IMR-90 (cell line): ENCODE measurements at regions of chr3 and their contacts with region 1.

Region 1: DNA sequence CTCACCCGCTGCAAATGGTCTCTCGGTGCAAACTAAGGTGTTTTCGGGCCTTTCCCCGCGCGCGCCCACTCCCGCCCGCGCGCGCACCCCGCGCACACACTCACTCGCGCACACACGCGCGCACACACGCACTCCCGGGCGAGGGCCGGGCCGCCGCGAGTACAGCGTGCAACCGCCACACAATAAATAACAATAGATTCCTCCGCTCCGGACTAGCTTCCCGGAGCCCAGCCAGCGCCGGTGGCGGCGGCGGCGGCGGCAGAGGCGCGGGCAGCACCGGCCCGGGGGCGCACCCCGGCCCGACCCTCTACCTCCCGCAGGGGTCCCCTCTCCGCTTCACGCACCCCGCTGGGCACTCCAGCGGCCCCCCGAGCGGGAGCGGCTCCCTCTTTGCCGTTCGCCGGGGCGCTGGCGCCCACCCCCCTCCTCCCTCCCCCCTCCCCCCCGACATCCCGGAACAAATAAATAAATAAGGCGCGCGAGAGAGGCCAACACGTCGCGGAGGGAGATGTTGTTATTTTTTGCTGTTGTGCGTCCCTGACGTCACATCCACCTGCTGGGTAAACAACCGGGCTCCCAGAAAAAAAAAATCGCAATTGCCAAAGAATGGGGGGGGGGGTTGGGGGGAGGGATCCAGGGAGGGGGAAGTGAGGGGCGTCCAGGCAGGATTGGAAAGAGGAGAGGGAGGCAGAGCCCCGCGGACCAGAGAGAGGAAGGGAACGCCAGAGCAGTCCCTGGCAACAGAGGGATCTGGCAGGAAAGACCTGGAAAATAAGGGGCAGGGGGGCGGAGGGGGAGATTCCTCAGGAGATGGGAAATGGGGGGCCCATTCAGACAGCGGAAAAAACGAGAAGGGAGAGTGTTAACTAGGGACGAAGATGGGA is at the start of gene FOXP1:
- DNase-seq: peak; percentile 64
- ATAC-seq: peak; percentile 34
- H3K4me3 ChIP-seq: peak within 1 kb of the TSS; percentile 90
- H3K27ac ChIP-seq: peak within 1 kb of the TSS; percentile 98
- H3K4me1 ChIP-seq: peaks cover 15% of the 10 kb centered on the region
- H3K27me3 ChIP-seq: no peaks in the 10 kb centered on the region
- CTCF ChIP-seq: no peak
- POLR2A ChIP-seq: no peak
- RAD21 ChIP-seq: no peak; the same call in 1 of the 2 replicates
- total RNA-seq, gene FOXP1: 128 and 132 TPM in 2 replicates

Region 2: DNA sequence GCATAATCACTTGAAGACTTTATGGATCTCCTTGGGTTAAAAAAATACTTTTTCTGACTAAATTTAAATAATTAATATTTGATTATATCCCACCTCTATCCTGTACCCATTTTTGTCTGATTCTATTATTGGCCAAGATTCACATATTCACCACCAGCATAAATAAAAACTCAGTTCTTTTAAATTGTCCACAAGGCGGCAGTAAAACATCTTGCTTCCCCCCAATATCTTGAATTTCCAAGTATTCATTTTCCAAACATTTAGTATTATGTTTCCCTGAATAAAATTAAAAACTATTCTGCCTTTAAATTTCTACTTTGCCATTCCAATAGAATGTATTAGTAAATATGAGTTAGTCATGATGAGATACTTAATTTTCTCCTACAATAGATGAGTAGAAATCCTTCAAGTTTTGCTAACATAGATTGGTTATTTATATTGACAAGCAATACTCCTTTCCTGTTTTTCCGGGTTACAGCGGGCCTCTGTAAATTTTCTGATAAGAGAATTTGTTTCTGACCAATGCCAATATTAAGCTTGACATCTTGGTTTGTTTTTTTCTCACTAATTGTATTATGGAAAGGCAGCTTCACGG is 1052.6 kb before region 1 on chr3:
- CTCF ChIA-PET with region 1: no interaction called
- POLR2A ChIA-PET with region 1: no interaction called
- dilution Hi-C with region 1: no loop called
- in situ Hi-C with region 1: no loop called
- intact Hi-C with region 1: loop called (anchors 5 kb)
- DNase-seq: peak; percentile 57
- ATAC-seq: peak; percentile 32
- H3K4me3 ChIP-seq: no peak overlapping the region
- H3K27ac ChIP-seq: no peak overlapping the region
- H3K4me1 ChIP-seq: no peaks in the 10 kb centered on the region
- H3K27me3 ChIP-seq: peaks cover 23% of the 10 kb centered on the region
- CTCF ChIP-seq: peak; percentile 74
- POLR2A ChIP-seq: no peak
- RAD21 ChIP-seq: peak; percentile 76

Region 3: DNA sequence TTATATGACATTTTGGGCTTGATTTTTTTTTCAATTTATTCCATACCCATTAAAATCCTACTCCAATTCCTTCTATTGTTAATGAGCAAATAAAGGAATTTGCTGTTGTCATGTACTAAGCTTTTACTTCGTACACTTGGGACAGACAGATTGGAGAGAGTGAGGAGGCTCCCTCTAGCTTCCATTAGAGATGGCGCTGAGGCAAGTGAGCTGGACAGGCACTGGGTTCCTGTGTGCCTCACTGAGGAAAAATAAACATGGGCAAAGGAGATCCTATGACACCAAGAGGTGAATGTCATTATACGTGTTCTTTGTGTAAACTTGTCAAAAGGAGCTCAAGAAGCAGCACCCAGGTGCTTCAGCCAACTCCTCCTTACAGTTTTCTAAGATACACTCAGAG is 830.2 kb before region 1 on chr3:
- CTCF ChIA-PET with region 1: no interaction called
- POLR2A ChIA-PET with region 1: no interaction called
- dilution Hi-C with region 1: no loop called
- in situ Hi-C with region 1: no loop called
- intact Hi-C with region 1: no loop called
- DNase-seq: no peak
- ATAC-seq: no peak; the same call in 1 of the 2 replicates
- H3K4me3 ChIP-seq: no peak overlapping the region
- H3K27ac ChIP-seq: no peak overlapping the region
- H3K4me1 ChIP-seq: peaks cover 2% of the 10 kb centered on the region; the same call in 1 of the 2 replicates
- H3K27me3 ChIP-seq: no peaks in the 10 kb centered on the region
- CTCF ChIP-seq: 0 out of 2 replicates have a peak, but pooled peaks have one; percentile 10
- POLR2A ChIP-seq: no peak
- RAD21 ChIP-seq: no peak

Region 4: GRCh38 chr3:70982700-70983140 is 601.1 kb before region 1 on chr3:
- CTCF ChIA-PET with region 1: no interaction called
- POLR2A ChIA-PET with region 1: no interaction called
- dilution Hi-C with region 1: no loop called
- in situ Hi-C with region 1: no loop called
- intact Hi-C with region 1: loop called (anchors 5 kb)
- DNase-seq: peak; percentile 86
- ATAC-seq: peak; percentile 70
- H3K4me3 ChIP-seq: no peak overlapping the region
- H3K27ac ChIP-seq: peak overlapping the region; percentile 72
- H3K4me1 ChIP-seq: peaks cover 35% of the 10 kb centered on the region
- H3K27me3 ChIP-seq: no peaks in the 10 kb centered on the region
- CTCF ChIP-seq: no peak
- POLR2A ChIP-seq: no peak
- RAD21 ChIP-seq: no peak

Region 5: GRCh38 chr3:71103430-71103921 is 480.3 kb before region 1 on chr3:
- CTCF ChIA-PET with region 1: no interaction called
- POLR2A ChIA-PET with region 1: no interaction called
- dilution Hi-C with region 1: no loop called
- in situ Hi-C with region 1: no loop called
- intact Hi-C with region 1: loop called (anchors 1 kb)
- DNase-seq: peak; percentile 62
- ATAC-seq: no peak
- H3K4me3 ChIP-seq: no peak overlapping the region
- H3K27ac ChIP-seq: peak overlapping the region; percentile 75
- H3K4me1 ChIP-seq: peaks cover 34% of the 10 kb centered on the region
- H3K27me3 ChIP-seq: no peaks in the 10 kb centered on the region
- CTCF ChIP-seq: no peak
- POLR2A ChIP-seq: no peak
- RAD21 ChIP-seq: no peak

Region 6: DNA sequence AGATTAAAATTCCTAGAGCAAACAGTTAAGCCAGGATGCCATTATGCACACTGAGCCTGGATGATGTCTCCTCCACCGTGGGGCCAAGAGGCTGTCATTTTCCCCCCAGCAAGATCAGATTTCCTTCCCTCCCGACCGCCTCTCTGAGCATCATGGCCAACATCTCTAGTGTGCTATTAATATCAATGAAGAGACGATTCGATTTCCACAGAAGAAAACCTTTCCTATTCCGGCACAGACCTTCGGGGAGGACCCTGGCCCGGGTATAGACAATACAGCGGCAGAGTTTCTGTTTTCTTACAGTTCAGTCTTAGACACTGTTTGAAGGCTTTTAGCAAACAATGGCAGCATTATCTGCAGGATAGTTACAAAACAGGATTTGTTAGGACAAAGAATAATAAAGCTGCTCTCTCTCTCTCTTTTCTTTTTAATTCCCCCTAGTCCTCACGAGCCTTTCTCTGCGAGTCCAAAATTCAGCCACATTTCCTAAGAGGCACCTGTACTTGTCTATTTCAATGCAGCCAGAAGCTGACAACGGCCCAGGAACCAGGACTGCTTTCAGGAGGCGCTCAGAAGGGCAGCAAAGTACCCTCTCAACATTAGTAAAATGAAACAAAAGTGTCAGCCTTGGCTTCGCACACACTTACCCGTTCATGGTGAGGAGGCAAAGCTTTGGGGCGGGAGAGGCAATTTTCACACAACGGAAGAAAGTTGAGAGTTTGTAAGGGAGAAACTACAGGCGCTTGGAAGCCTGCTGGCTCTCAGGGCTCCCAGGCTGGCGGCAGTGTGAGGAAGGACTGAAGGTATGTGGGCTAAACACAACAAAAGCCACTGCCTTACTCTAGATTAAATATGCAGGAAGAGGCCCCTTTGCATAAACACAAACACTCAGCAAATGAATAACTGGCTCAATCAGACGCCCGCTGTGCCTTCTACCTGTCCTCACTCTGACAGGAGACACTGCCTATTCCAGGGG is 278.3 kb before region 1 on chr3:
- CTCF ChIA-PET with region 1: no interaction called
- POLR2A ChIA-PET with region 1: no interaction called
- dilution Hi-C with region 1: no loop called
- in situ Hi-C with region 1: loop called (anchors 5 kb)
- intact Hi-C with region 1: loop called (anchors 1 kb)
- DNase-seq: peak; percentile 57
- ATAC-seq: peak; percentile 71
- H3K4me3 ChIP-seq: peak overlapping the region; percentile 28
- H3K27ac ChIP-seq: peak overlapping the region; percentile 77
- H3K4me1 ChIP-seq: peaks cover 14% of the 10 kb centered on the region
- H3K27me3 ChIP-seq: no peaks in the 10 kb centered on the region
- CTCF ChIP-seq: no peak
- POLR2A ChIP-seq: no peak
- RAD21 ChIP-seq: no peak

Region 7: DNA sequence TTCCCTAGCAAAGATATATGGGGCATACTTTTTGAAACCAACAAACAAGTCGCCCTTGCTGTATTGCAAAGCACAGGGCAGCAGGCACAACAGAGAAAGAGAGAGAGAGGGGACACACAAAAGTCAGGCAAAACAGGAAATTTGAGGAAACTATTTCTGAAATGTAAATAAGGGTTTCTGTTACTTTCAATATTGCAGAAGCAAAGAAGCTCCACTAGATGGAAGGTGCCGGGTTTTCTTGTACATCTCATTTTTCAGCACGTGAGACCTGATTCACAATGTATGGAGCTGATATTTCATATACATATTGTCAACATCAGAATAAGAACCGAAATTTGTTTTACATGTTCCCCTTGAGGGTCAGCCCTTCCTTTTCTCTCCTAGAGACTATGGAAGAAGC is 127.7 kb before region 1 on chr3:
- CTCF ChIA-PET with region 1: no interaction called
- POLR2A ChIA-PET with region 1: no interaction called
- dilution Hi-C with region 1: no loop called
- in situ Hi-C with region 1: no loop called
- intact Hi-C with region 1: loop called (anchors 5 kb)
- DNase-seq: peak; percentile 31
- ATAC-seq: peak; percentile 79
- H3K4me3 ChIP-seq: peak overlapping the region; percentile 6; the same call in 1 of the 2 replicates
- H3K27ac ChIP-seq: peak overlapping the region; percentile 60; the same call in 1 of the 2 replicates
- H3K4me1 ChIP-seq: peaks cover 3% of the 10 kb centered on the region
- H3K27me3 ChIP-seq: no peaks in the 10 kb centered on the region
- CTCF ChIP-seq: no peak; the same call in 1 of the 2 replicates
- POLR2A ChIP-seq: no peak
- RAD21 ChIP-seq: peak; percentile 31

Region 8: DNA sequence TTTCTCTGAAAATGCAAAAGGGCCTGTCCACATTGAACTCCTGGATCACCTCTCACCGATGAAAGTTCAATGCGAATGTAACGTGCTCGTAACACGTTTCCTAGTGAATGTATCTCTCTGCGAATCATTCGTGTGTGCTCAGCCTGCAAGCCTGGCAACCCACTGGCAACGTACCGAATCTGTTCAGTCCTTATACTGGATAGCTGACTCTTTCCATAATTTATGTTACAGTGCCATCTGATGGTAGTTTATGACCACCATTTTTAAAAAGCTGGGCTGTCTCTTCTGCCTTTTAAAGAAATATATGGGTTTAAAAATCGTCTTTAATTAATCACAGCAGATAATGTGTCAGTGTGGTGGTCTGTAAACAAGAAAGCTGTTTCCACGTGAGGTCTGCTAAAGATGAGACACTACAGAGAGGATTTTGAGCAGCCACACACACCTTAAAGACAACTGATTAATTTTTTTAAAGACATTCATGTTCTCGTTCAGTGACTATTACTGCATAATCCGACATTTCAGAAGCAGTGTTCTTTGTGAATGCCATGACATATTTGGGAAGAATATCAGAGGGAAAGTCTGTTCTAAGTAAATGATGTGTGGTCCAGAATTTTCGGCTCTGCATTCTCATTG is 69.1 kb after region 1 on chr3:
- CTCF ChIA-PET with region 1: no interaction called
- POLR2A ChIA-PET with region 1: interaction called, 3 read pairs
- dilution Hi-C with region 1: no loop called
- in situ Hi-C with region 1: no loop called
- intact Hi-C with region 1: loop called (anchors 2 kb)
- DNase-seq: peak; percentile 72
- ATAC-seq: peak; percentile 91
- H3K4me3 ChIP-seq: no peak overlapping the region
- H3K27ac ChIP-seq: no peak overlapping the region
- H3K4me1 ChIP-seq: no peaks in the 10 kb centered on the region
- H3K27me3 ChIP-seq: peaks cover 6% of the 10 kb centered on the region; the same call in 1 of the 2 replicates
- CTCF ChIP-seq: peak; percentile 76
- POLR2A ChIP-seq: no peak
- RAD21 ChIP-seq: peak; percentile 89

Region 9: GRCh38 chr3:72077473-72078259 is 493.9 kb after region 1 on chr3:
- CTCF ChIA-PET with region 1: no interaction called
- POLR2A ChIA-PET with region 1: no interaction called
- dilution Hi-C with region 1: no loop called
- in situ Hi-C with region 1: no loop called
- intact Hi-C with region 1: no loop called
- DNase-seq: no peak
- ATAC-seq: no peak
- H3K4me3 ChIP-seq: no peak overlapping the region
- H3K27ac ChIP-seq: no peak overlapping the region
- H3K4me1 ChIP-seq: no peaks in the 10 kb centered on the region
- H3K27me3 ChIP-seq: peaks cover 2% of the 10 kb centered on the region; the same call in 1 of the 2 replicates
- CTCF ChIP-seq: no peak
- POLR2A ChIP-seq: no peak
- RAD21 ChIP-seq: no peak